A549 (cell line): ENCODE measurements at regions of chr1 and their contacts with region 1.

Region 1: GRCh38 chr1:85289207-85289847 is 12.9 kb upstream of the BCL10 start:
- DNase-seq: peak in 1 of 2 experiments; percentile 64
- ATAC-seq: peak; percentile 94 to 95
- H3K4me3 ChIP-seq: no peak overlapping the region
- H3K27ac ChIP-seq: peak overlapping the region; percentile 45 to 77
- H3K4me1 ChIP-seq: peaks cover 23% of the 10 kb centered on the region
- CTCF ChIP-seq: no peak
- EP300 ChIP-seq: no peak
- POLR2A ChIP-seq: no peak
- RAD21 ChIP-seq: no peak

Region 2: DNA sequence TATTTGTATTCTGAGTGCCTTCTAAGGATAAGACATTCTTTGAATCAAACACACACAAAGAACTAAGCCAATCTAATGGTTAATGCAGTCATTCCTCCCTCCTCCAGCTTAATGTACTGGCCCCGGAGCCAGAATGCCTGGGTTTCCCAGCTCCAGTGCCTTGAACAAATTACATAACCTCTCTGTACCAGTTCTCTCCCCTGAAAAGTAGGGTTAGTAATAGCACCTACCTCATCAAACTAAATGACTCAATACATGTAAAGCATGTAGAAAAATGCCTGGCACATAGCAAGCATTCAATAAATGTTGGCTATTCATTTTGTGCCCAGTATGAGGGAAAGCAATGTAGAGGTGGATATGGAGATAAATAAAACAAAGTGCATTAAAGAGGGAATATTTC is 43.9 kb before region 1 on chr1:
- CTCF ChIA-PET with region 1: no interaction called
- POLR2A ChIA-PET with region 1: no interaction called
- DNase-seq: no peak
- ATAC-seq: no peak
- H3K4me3 ChIP-seq: no peak overlapping the region
- H3K27ac ChIP-seq: no peak overlapping the region
- H3K4me1 ChIP-seq: no peaks in the 10 kb centered on the region
- CTCF ChIP-seq: no peak
- EP300 ChIP-seq: no peak
- POLR2A ChIP-seq: no peak
- RAD21 ChIP-seq: no peak

Region 3: GRCh38 chr1:85276215-85276977 is 12.9 kb before region 1 on chr1 and contains the start of gene BCL10:
- CTCF ChIA-PET with region 1: interaction called, 5 read pairs
- POLR2A ChIA-PET with region 1: interaction called, 10 read pairs
- DNase-seq: peak; percentile 85 to 98
- ATAC-seq: peak; percentile 95 to 99
- H3K4me3 ChIP-seq: peak within 1 kb of the TSS; percentile 97
- H3K27ac ChIP-seq: peak within 1 kb of the TSS; percentile 94
- H3K4me1 ChIP-seq: peaks cover 43% of the 10 kb centered on the region
- CTCF ChIP-seq: no peak
- EP300 ChIP-seq: no peak
- POLR2A ChIP-seq: no peak; the same call in none of the 2 replicates
- RAD21 ChIP-seq: no peak
- polyA plus RNA-seq, gene BCL10: 12.7 and 15.5 TPM in 2 replicates